ENCODE measurements at regions of chr6 and their contacts with region 1.

Region 1: GRCh38 chr6:4936681-4937041 is 67.2 kb downstream of the RPP40 start:
- DNase-seq: peak; percentile 23
- H3K4me3 Mint-ChIP-seq: no peak overlapping the region
- H3K27ac Mint-ChIP-seq: no peak overlapping the region
- H3K4me1 Mint-ChIP-seq: peaks cover 32% of the 10 kb centered on the region
- H3K27me3 Mint-ChIP-seq: no peaks in the 10 kb centered on the region

Region 2: DNA sequence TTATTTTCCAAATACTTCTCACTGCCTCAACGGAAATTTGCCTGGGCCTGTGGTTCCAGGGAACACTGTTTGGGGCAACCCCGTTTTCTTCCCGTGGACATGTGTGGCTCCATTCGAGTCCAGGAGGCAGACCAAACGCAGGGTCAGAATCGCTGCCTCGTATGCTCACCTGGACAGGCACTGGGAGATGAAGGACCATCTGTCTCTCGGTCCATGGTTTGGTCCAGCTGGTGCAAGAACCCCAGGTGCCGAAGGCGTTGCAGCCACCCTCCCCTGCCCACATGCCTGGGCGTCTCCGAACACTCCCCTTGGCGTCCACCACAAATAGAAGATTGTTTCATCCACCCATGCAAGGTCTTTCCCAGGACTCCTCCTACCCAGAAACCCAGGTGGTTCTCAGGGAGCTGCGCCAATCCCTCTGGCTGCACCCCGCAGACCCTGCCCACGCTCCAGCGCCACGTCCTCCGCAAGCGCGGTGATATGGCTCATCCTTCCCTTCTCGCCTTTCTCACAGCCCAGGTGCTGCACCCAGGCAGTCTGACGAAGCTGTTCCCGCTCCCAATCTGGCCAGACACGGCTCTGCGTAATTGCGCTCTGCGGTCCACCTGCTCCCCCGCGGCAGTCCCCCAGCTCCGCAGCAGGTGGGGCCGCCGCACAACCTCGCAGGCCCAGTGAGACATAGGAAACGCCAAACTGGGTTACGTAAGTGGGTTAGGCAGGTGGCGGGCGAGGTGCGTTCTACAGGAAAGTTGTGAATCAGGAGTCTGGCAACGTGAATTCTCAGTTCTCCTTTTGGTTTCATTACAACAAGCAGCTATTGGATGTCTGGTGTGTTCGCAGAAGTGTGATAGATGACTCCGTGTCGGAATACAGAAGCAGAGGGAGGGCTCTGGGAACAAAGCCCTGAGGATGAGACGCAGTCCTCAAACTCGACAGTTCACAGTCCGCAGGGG is 655.0 kb before region 1 on chr6:
- CTCF ChIA-PET with region 1: no interaction called
- intact Hi-C with region 1: loop called (anchors 2 kb)
- DNase-seq: peak; percentile 75
- H3K4me3 Mint-ChIP-seq: peak overlapping the region; percentile 52
- H3K27ac Mint-ChIP-seq: no peak overlapping the region
- H3K4me1 Mint-ChIP-seq: peaks cover 7% of the 10 kb centered on the region
- H3K27me3 Mint-ChIP-seq: peaks cover 38% of the 10 kb centered on the region

Region 3: DNA sequence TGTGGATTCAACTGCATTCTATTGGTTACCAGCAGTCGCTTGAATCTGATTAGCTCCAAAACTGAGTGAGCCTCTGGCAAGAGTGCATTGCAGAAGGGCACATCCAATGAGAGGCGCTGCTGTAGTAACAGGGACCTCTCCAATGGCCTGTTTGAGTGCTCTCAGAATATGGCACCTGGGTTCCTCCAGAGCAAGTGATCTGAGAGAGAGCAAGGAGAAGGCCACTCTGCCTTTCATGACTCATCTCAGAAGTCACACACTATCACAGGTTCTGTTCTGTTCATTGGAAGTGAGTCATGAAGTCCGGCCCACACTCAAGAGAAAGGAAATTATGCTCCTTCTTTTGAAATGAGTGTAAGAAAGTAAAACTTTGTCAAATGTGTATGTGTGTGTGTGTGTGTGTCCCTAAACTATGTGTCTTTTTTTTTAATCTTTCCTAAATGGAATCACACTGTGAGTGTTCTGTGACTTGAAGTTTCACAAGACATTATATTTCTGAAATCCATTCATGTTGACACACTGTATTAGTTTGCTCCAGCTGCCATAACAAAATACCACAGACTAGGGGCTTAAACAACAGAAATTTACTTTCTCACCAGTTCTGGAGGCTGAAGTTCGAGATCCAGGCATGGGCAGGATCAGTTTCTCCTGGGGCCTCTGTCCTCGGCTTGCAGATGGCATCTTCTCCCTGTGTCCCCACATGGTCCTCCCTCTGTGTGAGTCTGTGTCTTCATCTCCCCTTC is 298.8 kb before region 1 on chr6:
- CTCF ChIA-PET with region 1: no interaction called
- intact Hi-C with region 1: loop called (anchors 2 kb)
- DNase-seq: peak; percentile 67
- H3K4me3 Mint-ChIP-seq: no peak overlapping the region
- H3K27ac Mint-ChIP-seq: no peak overlapping the region
- H3K4me1 Mint-ChIP-seq: peaks cover 15% of the 10 kb centered on the region
- H3K27me3 Mint-ChIP-seq: peaks cover 29% of the 10 kb centered on the region

Region 4: GRCh38 chr6:4727671-4728435 is 208.8 kb before region 1 on chr6:
- CTCF ChIA-PET with region 1: interaction called, 5 read pairs
- intact Hi-C with region 1: loop called (anchors 5 kb)
- DNase-seq: peak; percentile 23
- H3K4me3 Mint-ChIP-seq: no peak overlapping the region
- H3K27ac Mint-ChIP-seq: no peak overlapping the region
- H3K4me1 Mint-ChIP-seq: peaks cover 12% of the 10 kb centered on the region
- H3K27me3 Mint-ChIP-seq: peaks cover 18% of the 10 kb centered on the region

Region 5: GRCh38 chr6:4788953-4789584 is 147.6 kb before region 1 on chr6:
- CTCF ChIA-PET with region 1: no interaction called
- intact Hi-C with region 1: loop called (anchors 1 kb)
- DNase-seq: no peak
- H3K4me3 Mint-ChIP-seq: no peak overlapping the region
- H3K27ac Mint-ChIP-seq: no peak overlapping the region
- H3K4me1 Mint-ChIP-seq: peaks cover 55% of the 10 kb centered on the region
- H3K27me3 Mint-ChIP-seq: no peaks in the 10 kb centered on the region

Region 6: DNA sequence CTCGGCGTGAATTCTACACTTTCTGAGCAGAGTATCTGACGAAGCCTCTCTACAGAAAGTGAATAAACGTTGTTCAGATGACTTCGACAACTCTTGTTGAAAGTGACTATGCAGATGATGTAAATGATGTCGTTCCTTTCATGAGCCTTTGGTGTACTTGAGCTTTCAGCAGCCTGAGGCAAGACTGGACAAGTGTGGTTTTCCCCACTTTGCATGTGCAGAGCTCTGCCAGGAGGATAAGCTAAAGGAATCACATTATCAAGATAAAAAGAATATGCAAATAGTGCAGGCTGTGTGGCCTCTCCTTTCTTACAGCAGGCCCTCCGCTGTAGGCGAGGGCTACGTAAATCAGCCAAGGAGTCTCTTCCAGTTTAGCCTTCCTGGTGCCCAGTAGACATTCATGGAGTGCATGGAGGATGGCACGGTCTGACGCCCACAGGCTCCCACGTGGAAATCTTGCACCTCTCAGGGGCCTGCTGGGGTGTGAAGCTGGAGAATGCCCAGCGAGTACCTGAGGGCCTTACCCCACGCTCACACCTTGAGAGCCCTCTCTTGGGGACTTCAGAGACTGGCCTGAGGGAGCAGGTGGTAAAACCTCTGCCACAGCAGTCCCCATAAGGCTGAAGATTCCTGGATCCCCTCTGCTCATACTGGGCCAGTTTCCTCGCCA is 12.3 kb after region 1 on chr6:
- CTCF ChIA-PET with region 1: no interaction called
- intact Hi-C with region 1: no loop called
- DNase-seq: no peak
- H3K4me3 Mint-ChIP-seq: no peak overlapping the region
- H3K27ac Mint-ChIP-seq: no peak overlapping the region
- H3K4me1 Mint-ChIP-seq: no peaks in the 10 kb centered on the region
- H3K27me3 Mint-ChIP-seq: no peaks in the 10 kb centered on the region

Measured in activated naive CD4-positive, alpha-beta T cell treated with anti-CD3 and anti-CD28 coated beads for 36 hours (primary cell).